ENCODE measurements at regions of chr4 and their contacts with region 1.

Region 1: DNA sequence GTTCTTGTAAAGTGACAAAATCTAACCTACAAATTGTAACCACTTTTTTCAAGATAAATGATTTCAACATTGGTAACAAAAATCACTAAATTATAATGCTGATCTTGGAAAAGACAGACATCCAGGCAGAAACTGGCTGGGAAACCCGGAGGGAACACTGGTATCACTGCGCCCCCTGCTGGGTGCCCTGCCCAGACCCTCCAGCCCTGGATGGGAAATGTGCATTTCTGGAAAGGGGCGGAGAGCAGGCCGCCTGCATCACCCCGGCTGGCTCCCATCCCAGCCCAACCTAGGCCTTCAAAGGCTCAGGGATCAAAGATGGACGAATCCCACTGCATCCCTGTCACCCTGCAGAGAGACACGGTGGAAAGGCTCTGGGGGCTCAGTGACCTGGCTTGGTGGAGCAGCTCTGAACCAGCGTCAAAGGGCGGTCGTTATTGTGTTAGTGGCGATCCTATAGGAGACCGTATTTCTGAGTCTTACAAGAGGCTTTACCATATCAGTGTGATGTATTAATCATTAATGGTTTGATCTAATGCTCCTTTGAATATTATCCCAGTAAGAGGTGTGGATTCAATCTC is 37.3 kb downstream of the ACOX3 start:
- DNase-seq: peak; percentile 56
- H3K4me3 ChIP-seq: no peak overlapping the region
- H3K27ac ChIP-seq: no peak overlapping the region
- H3K4me1 ChIP-seq: peaks cover 16% of the 10 kb centered on the region
- H3K27me3 ChIP-seq: no peaks in the 10 kb centered on the region
- CTCF ChIP-seq: peak; percentile 93

Region 2: DNA sequence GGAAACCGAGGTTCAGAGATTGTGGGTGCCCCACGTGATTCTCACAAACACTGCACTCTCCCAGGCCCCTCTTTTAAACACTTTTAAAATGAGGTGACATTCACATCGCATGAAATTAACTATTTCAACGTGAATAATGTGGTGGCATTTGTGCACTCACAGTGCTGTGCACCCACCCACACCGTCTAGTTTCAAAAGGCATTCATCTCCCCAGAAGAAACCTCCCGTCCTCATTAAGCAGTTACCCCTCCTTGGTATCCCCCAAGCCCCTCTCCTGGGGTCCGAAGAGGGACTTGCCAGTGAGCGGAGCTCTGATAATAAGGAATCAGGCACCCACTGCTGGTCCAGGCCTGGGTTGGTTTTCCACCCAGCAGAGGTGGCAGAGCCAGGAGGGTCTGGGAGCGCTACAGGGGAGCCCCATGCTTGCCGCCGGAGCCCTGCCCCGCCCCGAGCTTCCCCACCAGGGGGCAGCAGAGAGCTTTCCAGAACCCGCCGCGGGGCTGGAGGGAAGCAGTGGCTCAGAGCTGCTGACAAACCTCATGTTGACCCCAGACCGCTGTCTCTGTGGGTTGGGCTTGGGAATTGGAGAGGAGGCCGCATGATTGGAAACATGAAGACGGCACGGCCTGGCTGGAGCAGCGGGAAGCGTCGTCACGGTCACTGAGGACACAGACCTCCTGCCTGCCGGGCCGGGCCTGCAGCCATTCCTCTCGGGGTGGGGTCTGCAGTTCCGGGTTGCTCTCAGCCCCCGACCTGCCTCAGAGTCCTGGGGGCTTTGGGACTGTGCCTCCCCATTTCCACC is 161.2 kb before region 1 on chr4:
- CTCF ChIA-PET with region 1: no interaction called
- dilution Hi-C with region 1: no loop called
- in situ Hi-C with region 1: loop called (anchors 5 kb)
- intact Hi-C with region 1: loop called (anchors 1 kb)
- DNase-seq: peak; percentile 39
- H3K4me3 ChIP-seq: no peak overlapping the region
- H3K27ac ChIP-seq: no peak overlapping the region
- H3K4me1 ChIP-seq: peaks cover 4% of the 10 kb centered on the region
- H3K27me3 ChIP-seq: no peaks in the 10 kb centered on the region
- CTCF ChIP-seq: peak; percentile 75 to 95

Region 3: GRCh38 chr4:8274765-8275547 is 128.3 kb before region 1 on chr4:
- CTCF ChIA-PET with region 1: interaction called, 4 read pairs
- dilution Hi-C with region 1: no loop called
- in situ Hi-C with region 1: no loop called
- intact Hi-C with region 1: loop called (anchors 1 kb)
- DNase-seq: peak; percentile 17
- H3K4me3 ChIP-seq: no peak overlapping the region
- H3K27ac ChIP-seq: no peak overlapping the region
- H3K4me1 ChIP-seq: peaks cover 10% of the 10 kb centered on the region
- H3K27me3 ChIP-seq: peaks cover 7% of the 10 kb centered on the region
- CTCF ChIP-seq: peak; percentile 20 to 47

Region 4: GRCh38 chr4:8330821-8331574 is 72.3 kb before region 1 on chr4:
- CTCF ChIA-PET with region 1: no interaction called
- dilution Hi-C with region 1: no loop called
- in situ Hi-C with region 1: loop called in 1 of 2 experiments (anchors 10 kb)
- intact Hi-C with region 1: no loop called
- DNase-seq: no peak
- H3K4me3 ChIP-seq: no peak overlapping the region
- H3K27ac ChIP-seq: no peak overlapping the region
- H3K4me1 ChIP-seq: peaks cover 17% of the 10 kb centered on the region
- H3K27me3 ChIP-seq: no peaks in the 10 kb centered on the region
- CTCF ChIP-seq: no peak

Measured in mammary epithelial cell (primary cell).